Heart left ventricle (tissue), 16 donors: ENCODE measurements at regions of chr4 and their contacts with region 1.

Region 1: GRCh38 chr4:97558204-97558804 is 585.0 kb downstream of the STPG2 start:
- DNase-seq: no peak
- ATAC-seq: no peak
- H3K4me3 ChIP-seq: no peak overlapping the region
- H3K27ac ChIP-seq: no peak overlapping the region
- H3K4me1 ChIP-seq: no peaks in the 10 kb centered on the region
- H3K27me3 ChIP-seq: no peaks in the 10 kb centered on the region
- CTCF ChIP-seq: no peak
- POLR2A ChIP-seq: no peak

Region 2: GRCh38 chr4:97432551-97432950 is 125.8 kb before region 1 on chr4:
- intact Hi-C with region 1: no loop called
- DNase-seq: no peak
- ATAC-seq: no peak
- H3K4me3 ChIP-seq: no peak overlapping the region
- H3K27ac ChIP-seq: no peak overlapping the region
- H3K4me1 ChIP-seq: no peaks in the 10 kb centered on the region
- H3K27me3 ChIP-seq: no peaks in the 10 kb centered on the region
- CTCF ChIP-seq: no peak
- POLR2A ChIP-seq: no peak

Region 3: DNA sequence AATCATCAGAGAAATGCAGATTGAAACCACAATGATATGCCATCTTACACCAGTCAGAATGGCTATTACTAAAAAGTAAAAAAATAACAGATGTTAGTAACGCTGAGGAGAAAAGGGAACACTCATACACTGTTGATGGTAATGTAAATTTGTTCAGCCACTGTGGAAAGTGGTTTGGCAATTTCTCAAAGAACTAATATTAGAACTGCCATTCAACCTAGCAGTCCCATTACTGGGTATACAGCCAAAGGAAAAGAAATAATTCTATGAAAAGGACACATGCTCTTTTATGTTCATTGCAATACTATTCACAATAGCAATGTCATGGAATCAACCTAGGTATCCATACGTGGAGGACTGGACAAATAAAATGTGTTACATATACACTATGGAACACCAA is 18.7 kb after region 1 on chr4:
- intact Hi-C with region 1: loop called in 1 of 10 experiments (anchors 2 kb)
- DNase-seq: no peak
- ATAC-seq: no peak
- H3K4me3 ChIP-seq: no peak overlapping the region
- H3K27ac ChIP-seq: no peak overlapping the region
- H3K4me1 ChIP-seq: no peaks in the 10 kb centered on the region
- H3K27me3 ChIP-seq: no peaks in the 10 kb centered on the region
- CTCF ChIP-seq: no peak
- POLR2A ChIP-seq: no peak